ENCODE measurements at regions of chr1 and their contacts with region 1.

Region 1: DNA sequence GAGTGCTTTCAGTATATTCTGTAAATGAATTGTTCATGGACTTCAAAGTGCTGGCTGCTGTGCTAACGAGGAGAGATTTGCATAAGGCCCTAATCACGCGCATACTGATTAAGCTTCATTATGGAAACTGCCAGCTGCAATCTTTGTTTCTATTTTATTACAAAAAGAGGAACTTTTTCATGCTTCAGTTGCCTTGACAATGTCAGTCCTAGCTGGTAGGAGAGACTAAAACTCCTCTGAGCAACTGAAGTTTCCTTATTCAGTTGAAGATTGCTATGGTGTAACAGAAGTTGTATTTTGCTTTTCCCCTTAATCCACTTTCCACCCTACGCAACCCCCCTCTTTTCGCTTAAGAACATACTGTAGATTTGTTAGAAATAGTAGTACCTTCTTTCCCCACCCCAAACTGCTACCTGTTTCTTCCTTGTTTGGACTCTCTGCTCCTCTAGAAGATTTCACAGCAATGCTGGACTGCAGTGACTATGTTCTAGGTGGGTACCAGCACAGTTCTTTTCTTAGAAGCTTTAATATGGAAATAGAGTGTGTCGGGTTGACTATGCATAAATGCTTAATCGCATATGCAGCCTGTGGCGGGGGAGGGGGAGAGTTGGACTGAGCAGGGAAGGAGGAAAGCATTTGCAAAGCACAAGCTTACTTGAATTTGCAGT is 108.3 kb downstream of the POU2F1 start:
- DNase-seq: peak; percentile 33
- ATAC-seq: peak; percentile 80
- H3K4me3 Mint-ChIP-seq: peak overlapping the region; percentile 84
- H3K27ac Mint-ChIP-seq: peak overlapping the region; percentile 97
- H3K4me1 Mint-ChIP-seq: peaks cover 65% of the 10 kb centered on the region
- H3K27me3 Mint-ChIP-seq: no peaks in the 10 kb centered on the region
- CTCF ChIP-seq: no peak

Region 2: GRCh38 chr1:167207940-167208623 is 120.9 kb before region 1 on chr1:
- CTCF ChIA-PET with region 1: no interaction called
- POLR2A ChIA-PET with region 1: no interaction called
- intact Hi-C with region 1: no loop called
- DNase-seq: no peak
- ATAC-seq: no peak
- H3K4me3 Mint-ChIP-seq: no peak overlapping the region
- H3K27ac Mint-ChIP-seq: no peak overlapping the region
- H3K4me1 Mint-ChIP-seq: peaks cover 7% of the 10 kb centered on the region
- H3K27me3 Mint-ChIP-seq: no peaks in the 10 kb centered on the region
- CTCF ChIP-seq: no peak

Region 3: GRCh38 chr1:167270349-167271092 is 58.4 kb before region 1 on chr1:
- CTCF ChIA-PET with region 1: interaction called, 21 read pairs
- POLR2A ChIA-PET with region 1: interaction called, 15 read pairs
- intact Hi-C with region 1: no loop called
- DNase-seq: no peak
- ATAC-seq: no peak
- H3K4me3 Mint-ChIP-seq: no peak overlapping the region
- H3K27ac Mint-ChIP-seq: no peak overlapping the region
- H3K4me1 Mint-ChIP-seq: peaks cover 42% of the 10 kb centered on the region
- H3K27me3 Mint-ChIP-seq: no peaks in the 10 kb centered on the region
- CTCF ChIP-seq: no peak

Region 4: GRCh38 chr1:167288390-167289074 is 40.4 kb before region 1 on chr1:
- CTCF ChIA-PET with region 1: no interaction called
- POLR2A ChIA-PET with region 1: no interaction called
- intact Hi-C with region 1: no loop called
- DNase-seq: no peak
- ATAC-seq: no peak
- H3K4me3 Mint-ChIP-seq: no peak overlapping the region
- H3K27ac Mint-ChIP-seq: no peak overlapping the region
- H3K4me1 Mint-ChIP-seq: peaks cover 29% of the 10 kb centered on the region
- H3K27me3 Mint-ChIP-seq: no peaks in the 10 kb centered on the region
- CTCF ChIP-seq: no peak

Region 5: GRCh38 chr1:167312871-167313270 is 16.1 kb before region 1 on chr1:
- CTCF ChIA-PET with region 1: no interaction called
- POLR2A ChIA-PET with region 1: no interaction called
- intact Hi-C with region 1: loop called (anchors 2 kb)
- DNase-seq: no peak
- ATAC-seq: no peak
- H3K4me3 Mint-ChIP-seq: no peak overlapping the region
- H3K27ac Mint-ChIP-seq: no peak overlapping the region
- H3K4me1 Mint-ChIP-seq: peaks cover 9% of the 10 kb centered on the region
- H3K27me3 Mint-ChIP-seq: no peaks in the 10 kb centered on the region
- CTCF ChIP-seq: no peak

Region 6: DNA sequence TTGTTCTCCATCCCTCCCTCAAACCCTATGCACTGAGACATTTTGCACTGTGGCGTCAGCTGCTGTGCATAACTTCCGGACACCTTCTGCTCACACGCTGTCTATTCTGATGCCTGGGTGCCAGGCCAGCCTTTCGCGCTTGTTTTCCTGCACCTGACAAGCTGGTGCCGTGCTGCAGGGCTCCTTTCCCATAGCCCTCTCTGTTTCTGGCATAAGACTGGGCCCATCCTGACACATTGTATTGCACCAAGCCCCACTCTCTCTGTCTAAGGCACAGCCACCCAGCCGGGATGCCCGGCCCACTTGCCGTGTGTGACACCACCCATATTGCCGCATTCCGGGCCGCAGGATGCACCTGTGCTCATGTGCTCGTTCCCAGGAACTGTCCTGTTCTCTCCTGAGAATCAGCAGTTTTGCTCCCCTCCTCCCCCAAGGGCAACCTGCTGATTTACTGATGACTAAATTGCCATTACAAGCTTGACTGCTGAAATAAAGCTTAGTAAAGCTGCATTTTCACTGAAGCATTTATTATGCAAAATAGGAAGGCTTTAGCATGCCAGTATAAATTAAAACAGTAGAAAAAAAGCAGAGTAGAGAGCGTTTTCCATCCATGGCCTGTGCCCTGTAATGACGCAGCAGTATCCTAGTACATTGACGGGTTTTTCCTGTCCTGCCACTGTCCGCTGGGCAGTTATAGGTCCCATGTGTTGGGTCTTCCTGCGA is 101.3 kb after region 1 on chr1:
- CTCF ChIA-PET with region 1: no interaction called
- POLR2A ChIA-PET with region 1: interaction called, 3 read pairs
- intact Hi-C with region 1: loop called (anchors 2 kb)
- DNase-seq: no peak
- ATAC-seq: peak; percentile 35
- H3K4me3 Mint-ChIP-seq: peak overlapping the region; percentile 61
- H3K27ac Mint-ChIP-seq: peak overlapping the region; percentile 90
- H3K4me1 Mint-ChIP-seq: peaks cover 53% of the 10 kb centered on the region
- H3K27me3 Mint-ChIP-seq: no peaks in the 10 kb centered on the region
- CTCF ChIP-seq: no peak

Region 7: DNA sequence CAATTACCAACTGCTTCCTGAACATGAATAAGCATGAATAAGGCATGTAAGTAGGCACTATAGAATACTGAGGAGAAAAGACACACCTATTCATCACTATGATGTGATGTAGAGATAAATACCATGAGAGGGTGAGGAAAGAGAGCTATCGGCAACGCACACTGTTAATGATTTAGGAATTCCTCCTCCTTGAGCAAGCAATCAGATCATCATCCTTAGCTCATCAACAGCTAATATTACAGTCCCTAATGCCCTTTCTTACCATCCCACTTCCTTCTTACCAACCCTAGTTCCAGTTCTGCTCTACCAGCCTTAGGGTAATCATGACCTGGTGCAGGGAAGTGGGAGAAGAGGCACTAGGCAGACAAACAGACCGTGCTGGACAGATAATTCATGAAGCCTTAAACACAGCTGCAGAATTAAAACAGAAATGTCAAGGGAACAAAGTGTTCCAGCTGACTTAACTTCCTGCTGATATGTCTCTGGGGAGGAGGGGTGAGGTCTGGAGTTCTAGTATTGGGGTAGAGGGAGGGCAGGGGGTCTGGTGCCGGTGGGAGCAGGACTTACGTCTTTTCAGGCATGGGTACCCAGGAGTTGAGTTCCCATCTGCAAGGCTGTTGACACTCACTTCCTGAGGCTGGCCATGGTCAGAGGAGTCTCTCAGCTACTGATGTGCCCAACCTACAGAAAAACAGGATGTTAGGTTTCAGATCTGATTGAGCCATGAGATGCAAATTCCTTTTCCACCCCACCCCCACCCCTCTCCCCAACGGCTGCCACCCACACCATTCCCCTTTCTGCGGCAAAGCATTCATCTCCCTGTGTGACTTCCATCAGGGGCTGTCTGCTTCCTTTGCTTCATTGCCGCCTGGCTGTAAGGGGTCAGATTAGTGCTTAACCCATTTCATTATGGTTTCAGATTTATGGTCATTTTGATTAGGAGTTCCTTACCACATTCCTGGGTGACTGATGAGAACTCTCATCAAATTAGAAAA is 288.5 kb after region 1 on chr1:
- CTCF ChIA-PET with region 1: no interaction called
- POLR2A ChIA-PET with region 1: no interaction called
- intact Hi-C with region 1: loop called (anchors 5 kb)
- DNase-seq: peak; percentile 62
- ATAC-seq: peak; percentile 89
- H3K4me3 Mint-ChIP-seq: peak overlapping the region; percentile 77
- H3K27ac Mint-ChIP-seq: peak overlapping the region; percentile 94
- H3K4me1 Mint-ChIP-seq: peaks cover 92% of the 10 kb centered on the region
- H3K27me3 Mint-ChIP-seq: no peaks in the 10 kb centered on the region
- CTCF ChIP-seq: no peak